ENCODE measurements at regions of chr7 and their contacts with region 1.

Region 1: DNA sequence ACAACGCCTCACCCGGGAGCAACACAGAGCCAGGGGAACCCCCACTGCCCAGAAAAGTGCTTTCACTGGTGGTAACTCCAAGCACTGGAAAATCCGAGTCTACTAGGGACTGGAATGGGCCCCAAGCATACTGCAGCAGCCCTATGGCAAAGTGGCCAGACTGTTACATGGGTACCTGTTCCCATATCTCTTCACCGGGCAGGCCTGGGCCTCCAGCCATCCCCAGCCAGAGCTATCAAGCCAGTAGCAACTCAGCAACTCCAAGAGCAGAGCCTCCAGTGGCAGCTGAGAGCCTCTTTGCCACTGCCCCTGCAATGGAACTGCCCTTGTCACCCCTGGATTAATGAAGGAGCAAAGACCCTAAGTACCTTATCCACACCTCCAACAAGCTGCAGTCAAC is 73.5 kb downstream of the HBP1 start:
- DNase-seq: no peak
- ATAC-seq: no peak
- H3K4me3 Mint-ChIP-seq: no peak overlapping the region
- H3K27ac Mint-ChIP-seq: no peak overlapping the region
- H3K4me1 Mint-ChIP-seq: peaks cover 3% of the 10 kb centered on the region
- H3K27me3 Mint-ChIP-seq: no peaks in the 10 kb centered on the region
- CTCF ChIP-seq: no peak

Region 2: DNA sequence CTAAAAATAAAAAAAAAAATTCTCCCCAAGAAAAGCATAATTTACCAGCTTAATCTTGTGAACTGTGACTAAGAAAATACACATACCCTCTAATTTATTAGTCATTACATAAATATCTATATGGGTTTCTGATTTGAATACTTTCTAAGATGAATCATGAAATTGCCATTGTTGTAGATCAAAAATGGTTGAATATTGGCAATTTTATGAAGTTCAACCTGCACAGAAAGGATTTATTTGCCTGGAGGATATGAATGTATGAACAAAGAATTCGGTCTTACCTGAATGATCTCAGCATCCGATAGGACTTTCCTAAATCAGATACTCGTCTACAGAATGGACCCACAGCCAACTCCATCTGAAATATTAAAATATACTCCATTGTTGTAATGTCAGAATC is 11.9 kb before region 1 on chr7:
- CTCF ChIA-PET with region 1: no interaction called
- POLR2A ChIA-PET with region 1: no interaction called
- intact Hi-C with region 1: no loop called
- DNase-seq: no peak
- ATAC-seq: no peak
- H3K4me3 Mint-ChIP-seq: no peak overlapping the region
- H3K27ac Mint-ChIP-seq: no peak overlapping the region
- H3K4me1 Mint-ChIP-seq: peaks cover 3% of the 10 kb centered on the region
- H3K27me3 Mint-ChIP-seq: no peaks in the 10 kb centered on the region
- CTCF ChIP-seq: no peak

Region 3: GRCh38 chr7:107501593-107501992 is 259.3 kb after region 1 on chr7:
- CTCF ChIA-PET with region 1: no interaction called
- POLR2A ChIA-PET with region 1: no interaction called
- intact Hi-C with region 1: loop called (anchors 5 kb)
- DNase-seq: no peak
- ATAC-seq: no peak
- H3K4me3 Mint-ChIP-seq: no peak overlapping the region
- H3K27ac Mint-ChIP-seq: no peak overlapping the region
- H3K4me1 Mint-ChIP-seq: no peaks in the 10 kb centered on the region
- H3K27me3 Mint-ChIP-seq: no peaks in the 10 kb centered on the region
- CTCF ChIP-seq: no peak

Measured in activated B cell treated with CpG ODN at 0.5 μM for 24 hours (primary cell).